ENCODE measurements at regions of chr2 and their contacts with region 1.

Region 1: GRCh38 chr2:134189009-134189720 is 64.7 kb upstream of the MGAT5 start:
- DNase-seq: no peak
- H3K4me3 ChIP-seq: no peak overlapping the region
- H3K27me3 ChIP-seq: no peaks in the 10 kb centered on the region
- CTCF ChIP-seq: no peak

Region 2: DNA sequence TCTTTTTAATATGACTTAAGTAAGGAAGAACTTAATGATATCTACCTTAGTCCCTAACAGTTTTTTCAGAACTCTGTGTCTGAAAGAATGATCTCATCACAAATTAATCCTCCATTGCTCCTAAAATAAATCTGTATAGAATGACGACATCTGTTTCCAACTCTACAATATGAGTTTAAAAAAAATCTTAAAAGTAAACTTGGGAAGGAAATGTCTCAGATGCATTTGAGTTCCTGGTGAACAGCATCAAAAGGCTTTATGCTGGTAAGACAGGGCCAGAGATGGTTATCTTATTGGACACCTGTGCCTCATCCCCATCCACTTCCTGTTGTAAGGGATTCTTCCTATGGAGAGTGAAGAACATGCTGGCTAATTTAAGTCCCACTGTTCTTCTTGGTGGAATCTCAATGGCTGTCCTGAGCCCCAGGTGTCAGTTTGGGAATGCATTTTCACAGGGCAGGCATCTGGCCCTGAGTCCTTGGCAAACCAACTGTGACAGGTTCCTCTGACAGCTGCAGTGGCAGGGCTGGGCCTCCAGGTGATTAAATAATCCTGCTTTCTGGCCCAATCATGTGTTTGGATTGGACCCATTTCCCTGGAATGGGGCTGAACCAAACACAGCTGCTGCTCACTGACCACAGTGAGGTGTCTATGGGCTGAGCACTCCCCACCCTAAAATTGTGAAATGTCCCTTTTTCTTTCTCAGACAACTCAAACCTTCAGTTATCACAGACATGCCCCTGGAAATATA is 608.0 kb before region 1 on chr2:
- CTCF ChIA-PET with region 1: no interaction called
- POLR2A ChIA-PET with region 1: no interaction called
- DNase-seq: no peak
- H3K4me3 ChIP-seq: no peak overlapping the region
- H3K27me3 ChIP-seq: no peaks in the 10 kb centered on the region
- CTCF ChIP-seq: no peak

Region 3: GRCh38 chr2:134163336-134163735 is 25.8 kb before region 1 on chr2:
- CTCF ChIA-PET with region 1: no interaction called
- POLR2A ChIA-PET with region 1: no interaction called
- DNase-seq: no peak
- H3K4me3 ChIP-seq: no peak overlapping the region
- H3K27me3 ChIP-seq: no peaks in the 10 kb centered on the region
- CTCF ChIP-seq: no peak

Region 4: GRCh38 chr2:134173338-134174016 is 15.7 kb before region 1 on chr2:
- CTCF ChIA-PET with region 1: interaction called, 3 read pairs
- POLR2A ChIA-PET with region 1: interaction called, 11 read pairs
- DNase-seq: no peak
- H3K4me3 ChIP-seq: no peak overlapping the region
- H3K27me3 ChIP-seq: no peaks in the 10 kb centered on the region
- CTCF ChIP-seq: no peak